Gastrocnemius medialis (tissue), 4 donors: ENCODE measurements at regions of chr6 and their contacts with region 1.

Region 1: DNA sequence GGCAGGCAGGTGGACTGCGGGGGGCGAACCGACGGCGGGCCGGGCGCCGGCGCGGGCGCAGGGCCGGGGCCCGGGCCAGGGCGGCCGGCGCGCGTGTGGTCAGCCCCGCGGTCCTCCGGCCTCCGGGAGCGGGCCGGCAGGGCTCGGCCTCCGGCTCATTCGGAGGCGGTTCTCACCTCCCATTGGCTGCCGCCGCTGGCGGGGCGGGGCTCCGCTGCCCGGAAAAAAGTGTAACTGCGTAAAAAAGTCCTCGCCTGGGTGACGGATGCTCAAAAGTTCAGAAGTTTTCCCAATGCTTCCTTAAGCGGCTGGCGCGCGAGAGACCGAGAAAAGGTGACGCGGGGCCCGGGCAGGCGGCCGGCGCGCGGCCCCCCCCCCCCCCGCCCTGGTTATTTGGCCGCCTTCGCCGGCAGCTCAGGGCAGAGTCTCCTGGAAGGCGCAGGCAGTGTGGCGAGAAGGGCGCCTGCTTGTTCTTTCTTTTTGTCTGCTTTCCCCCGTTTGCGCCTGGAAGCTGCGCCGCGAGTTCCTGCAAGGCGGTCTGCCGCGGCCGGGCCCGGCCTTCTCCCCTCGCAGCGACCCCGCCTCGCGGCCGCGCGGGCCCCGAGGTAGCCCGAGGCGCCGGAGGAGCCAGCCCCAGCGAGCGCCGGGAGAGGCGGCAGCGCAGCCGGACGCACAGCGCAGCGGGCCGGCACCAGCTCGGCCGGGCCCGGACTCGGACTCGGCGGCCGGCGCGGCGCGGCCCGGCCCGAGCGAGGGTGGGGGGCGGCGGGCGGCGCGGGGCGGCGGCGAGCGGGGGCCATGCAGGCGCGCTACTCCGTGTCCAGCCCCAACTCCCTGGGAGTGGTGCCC is at the start of gene FOXC1:
- DNase-seq: peak; percentile 70 to 71
- ATAC-seq: peak; percentile 68 to 72
- H3K4me3 ChIP-seq: peak within 1 kb of the TSS; percentile 56 to 64 (median 60)
- H3K27ac ChIP-seq: peak within 1 kb of the TSS; percentile 76 to 80 (median 79)
- H3K4me1 ChIP-seq: peaks cover 5 to 20% of the 10 kb centered on the region in 2 donors
- H3K27me3 ChIP-seq: peaks cover 81 to 84% (median 83%) of the 10 kb centered on the region in 3 donors
- CTCF ChIP-seq: no peak
- POLR2A ChIP-seq: peak; percentile 60 to 77
- total RNA-seq, gene FOXC1: 0.92 to 3.9 (median 2.0) TPM

Region 2: DNA sequence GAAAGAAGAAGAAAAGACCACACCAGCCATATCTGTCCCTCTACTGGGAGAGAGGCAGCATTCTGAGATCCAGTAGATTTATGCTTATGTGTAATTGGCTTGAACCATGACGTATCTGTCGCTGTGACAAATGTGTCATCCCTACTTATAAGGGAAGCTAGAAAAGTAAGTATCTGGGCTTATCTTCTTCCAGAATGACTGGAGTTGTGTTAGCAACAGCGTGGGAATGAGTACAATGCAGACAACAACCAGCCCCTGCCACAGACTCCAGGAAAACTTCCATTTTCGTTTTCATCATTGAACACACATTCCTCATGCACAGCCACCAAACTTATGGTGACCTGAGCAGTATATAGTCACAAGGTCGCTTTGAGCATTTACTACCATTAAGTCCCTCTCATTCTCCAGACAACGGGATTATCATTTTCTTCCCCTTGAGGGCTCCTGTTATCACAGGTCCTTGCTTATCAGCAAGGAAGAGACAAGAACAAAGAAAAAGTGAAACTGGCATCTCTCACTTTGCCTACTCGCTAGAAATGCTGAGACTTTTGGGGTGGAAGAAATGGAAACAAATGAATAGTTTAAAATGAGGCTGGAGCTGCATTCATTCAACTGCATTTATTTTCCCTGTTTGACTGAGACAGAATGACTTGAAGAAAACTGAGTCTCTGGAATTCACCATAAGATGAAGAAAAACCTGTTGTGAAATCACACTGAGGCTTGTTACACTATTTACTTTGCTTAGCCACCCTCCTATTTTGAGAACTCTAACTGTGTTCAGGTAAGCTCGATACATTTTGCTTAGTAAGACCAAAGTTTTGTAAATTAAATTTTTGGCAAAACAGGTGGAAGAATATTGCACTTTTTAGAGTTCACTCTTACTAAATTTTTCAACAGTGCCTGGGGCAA is 447.3 kb before region 1 on chr6:
- in situ Hi-C with region 1: no loop called
- intact Hi-C with region 1: no loop called
- DNase-seq: no peak
- ATAC-seq: no peak
- H3K4me3 ChIP-seq: no peak overlapping the region
- H3K27ac ChIP-seq: no peak overlapping the region
- H3K4me1 ChIP-seq: no peaks in the 10 kb centered on the region
- H3K27me3 ChIP-seq: no peaks in the 10 kb centered on the region
- CTCF ChIP-seq: no peak
- POLR2A ChIP-seq: no peak

Region 3: DNA sequence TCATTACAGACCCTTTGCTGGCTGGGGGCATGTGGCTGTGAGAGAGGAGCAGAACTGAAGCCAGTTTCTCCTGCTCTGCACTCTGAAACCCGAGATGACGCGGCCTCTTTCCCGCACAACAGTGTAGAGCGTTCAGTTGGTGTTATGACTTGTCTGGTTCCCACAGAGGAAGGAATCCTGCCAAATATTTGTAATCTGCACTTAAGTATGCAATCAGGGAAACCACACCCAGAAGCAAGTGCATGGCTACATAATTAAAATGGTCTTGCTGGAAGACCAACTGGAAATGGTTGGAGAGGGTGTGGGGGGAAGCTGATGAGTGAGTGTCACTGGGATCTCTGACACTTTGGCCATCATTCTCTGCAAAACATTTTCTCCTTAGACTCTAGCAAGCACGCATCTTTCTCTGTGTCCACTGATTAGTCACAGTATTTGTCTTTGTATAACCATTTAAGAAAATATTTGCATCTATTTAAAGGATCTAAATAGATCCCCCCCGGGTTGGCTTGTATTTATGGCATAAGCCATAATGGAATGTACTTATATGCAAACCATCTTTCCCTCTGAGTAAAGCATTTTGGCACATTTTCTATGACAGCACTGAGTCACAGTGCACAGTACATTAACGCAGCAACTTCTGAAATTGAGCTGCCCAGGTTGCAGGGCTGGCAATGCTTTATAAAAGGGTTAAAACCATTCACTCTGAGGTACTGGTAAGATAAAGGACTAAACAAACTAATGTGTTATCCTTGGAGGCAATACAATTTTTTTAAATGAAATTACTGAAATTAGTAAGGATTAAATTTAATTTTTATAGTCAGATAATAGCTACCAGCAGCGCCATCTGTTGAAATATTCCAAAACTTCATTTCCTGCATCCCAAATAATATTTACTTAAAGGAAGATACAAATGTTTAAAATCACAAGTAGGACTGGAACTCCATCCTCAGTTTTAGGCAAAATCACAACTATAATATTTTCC is 76.5 kb after region 1 on chr6:
- in situ Hi-C with region 1: no loop called
- intact Hi-C with region 1: loop called (anchors 5 kb)
- DNase-seq: no peak
- ATAC-seq: peak; percentile 33 to 56
- H3K4me3 ChIP-seq: no peak overlapping the region
- H3K27ac ChIP-seq: peak overlapping the region in 1 of 4 donors; percentile 28
- H3K4me1 ChIP-seq: peaks cover 0 to 14% of the 10 kb centered on the region in 2 donors
- H3K27me3 ChIP-seq: no peaks in the 10 kb centered on the region
- CTCF ChIP-seq: no peak
- POLR2A ChIP-seq: no peak

Region 4: GRCh38 chr6:2103644-2104523 is 494.0 kb after region 1 on chr6:
- in situ Hi-C with region 1: loop called in 3 of 4 experiments (anchors 10 to 25 kb)
- intact Hi-C with region 1: loop called (anchors 1 kb)
- DNase-seq: no peak
- ATAC-seq: no peak
- H3K4me3 ChIP-seq: peak overlapping the region in 1 of 4 donors; percentile 12
- H3K27ac ChIP-seq: peak overlapping the region in 1 of 4 donors; percentile 37
- H3K4me1 ChIP-seq: no peaks in the 10 kb centered on the region
- H3K27me3 ChIP-seq: no peaks in the 10 kb centered on the region
- CTCF ChIP-seq: peak; percentile 13 to 43 (median 25)
- POLR2A ChIP-seq: no peak

Region 5: GRCh38 chr6:2245094-2245876 is 635.4 kb after region 1 on chr6 and contains the start of gene GMDS:
- in situ Hi-C with region 1: no loop called
- intact Hi-C with region 1: loop called (anchors 2 kb)
- DNase-seq: peak; percentile 64 to 78
- ATAC-seq: peak; percentile 90
- H3K4me3 ChIP-seq: peak within 1 kb of the TSS; percentile 70 to 96 (median 71)
- H3K27ac ChIP-seq: peak within 1 kb of the TSS; percentile 88 to 96 (median 90)
- H3K4me1 ChIP-seq: peaks cover 5 to 13% of the 10 kb centered on the region in 2 donors
- H3K27me3 ChIP-seq: no peaks in the 10 kb centered on the region
- CTCF ChIP-seq: peak in 1 of 5 experiments; percentile 17
- POLR2A ChIP-seq: peak; percentile 91 to 96
- total RNA-seq, gene GMDS: 3.4 to 7.2 (median 4.6) TPM

Region 6: DNA sequence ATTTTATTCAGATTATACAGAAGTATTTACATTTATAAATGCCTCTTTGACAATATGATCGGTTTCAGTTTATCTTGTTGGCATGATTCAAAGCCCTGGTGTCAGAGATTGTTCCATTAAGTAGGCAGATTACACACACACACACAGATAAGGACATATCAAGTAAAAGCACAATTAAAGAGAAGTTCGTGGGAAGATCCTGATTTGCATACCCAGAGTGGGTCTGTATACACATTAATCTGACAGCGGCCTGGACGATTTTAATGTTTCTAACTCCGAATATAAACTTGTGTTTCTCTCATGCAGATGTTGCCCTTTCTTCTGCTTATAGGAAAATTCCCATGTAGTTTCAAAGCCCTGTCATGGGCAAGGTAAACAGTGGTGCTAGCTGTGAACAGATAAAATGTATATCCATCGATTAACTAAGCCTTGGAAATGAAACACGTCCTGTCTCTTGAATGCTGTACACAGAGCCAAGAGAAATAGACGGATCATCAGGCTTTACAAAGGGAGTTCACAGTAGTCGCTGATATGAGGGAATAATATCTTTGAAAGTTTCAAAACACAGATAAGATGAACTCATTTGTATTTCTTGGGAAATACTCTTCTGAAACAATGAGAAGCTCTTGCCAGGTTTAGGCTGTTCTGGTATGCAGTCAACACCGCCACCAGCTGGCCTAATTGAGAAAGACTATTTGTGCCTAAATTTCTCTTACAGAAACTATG is 743.7 kb after region 1 on chr6:
- in situ Hi-C with region 1: loop called in 1 of 4 experiments (anchors 10 kb)
- intact Hi-C with region 1: no loop called
- DNase-seq: peak; percentile 22 to 31
- ATAC-seq: no peak
- H3K4me3 ChIP-seq: no peak overlapping the region
- H3K27ac ChIP-seq: no peak overlapping the region
- H3K4me1 ChIP-seq: no peaks in the 10 kb centered on the region
- H3K27me3 ChIP-seq: no peaks in the 10 kb centered on the region
- CTCF ChIP-seq: peak; percentile 37 to 73 (median 56)
- POLR2A ChIP-seq: no peak

Region 7: GRCh38 chr6:2749969-2750600 is 1140.2 kb after region 1 on chr6:
- in situ Hi-C with region 1: no loop called
- intact Hi-C with region 1: loop called (anchors 5 kb)
- DNase-seq: no peak
- ATAC-seq: no peak
- H3K4me3 ChIP-seq: peak overlapping the region in 3 of 4 donors; percentile 26 to 56 (median 43)
- H3K27ac ChIP-seq: peak overlapping the region in 2 of 4 donors; percentile 62 to 74
- H3K4me1 ChIP-seq: peaks cover 24 to 28% of the 10 kb centered on the region in 2 donors
- H3K27me3 ChIP-seq: no peaks in the 10 kb centered on the region
- CTCF ChIP-seq: peak; percentile 59 to 87 (median 75)
- POLR2A ChIP-seq: no peak